ENCODE measurements at regions of chr10 and their contacts with region 1.

Region 1: GRCh38 chr10:21993360-21994001 is 10.0 kb downstream of the DNAJC1 start:
- DNase-seq: no peak
- H3K4me3 Mint-ChIP-seq: no peak overlapping the region
- H3K27ac Mint-ChIP-seq: no peak overlapping the region
- H3K4me1 Mint-ChIP-seq: peaks cover 11% of the 10 kb centered on the region
- H3K27me3 Mint-ChIP-seq: no peaks in the 10 kb centered on the region

Region 2: DNA sequence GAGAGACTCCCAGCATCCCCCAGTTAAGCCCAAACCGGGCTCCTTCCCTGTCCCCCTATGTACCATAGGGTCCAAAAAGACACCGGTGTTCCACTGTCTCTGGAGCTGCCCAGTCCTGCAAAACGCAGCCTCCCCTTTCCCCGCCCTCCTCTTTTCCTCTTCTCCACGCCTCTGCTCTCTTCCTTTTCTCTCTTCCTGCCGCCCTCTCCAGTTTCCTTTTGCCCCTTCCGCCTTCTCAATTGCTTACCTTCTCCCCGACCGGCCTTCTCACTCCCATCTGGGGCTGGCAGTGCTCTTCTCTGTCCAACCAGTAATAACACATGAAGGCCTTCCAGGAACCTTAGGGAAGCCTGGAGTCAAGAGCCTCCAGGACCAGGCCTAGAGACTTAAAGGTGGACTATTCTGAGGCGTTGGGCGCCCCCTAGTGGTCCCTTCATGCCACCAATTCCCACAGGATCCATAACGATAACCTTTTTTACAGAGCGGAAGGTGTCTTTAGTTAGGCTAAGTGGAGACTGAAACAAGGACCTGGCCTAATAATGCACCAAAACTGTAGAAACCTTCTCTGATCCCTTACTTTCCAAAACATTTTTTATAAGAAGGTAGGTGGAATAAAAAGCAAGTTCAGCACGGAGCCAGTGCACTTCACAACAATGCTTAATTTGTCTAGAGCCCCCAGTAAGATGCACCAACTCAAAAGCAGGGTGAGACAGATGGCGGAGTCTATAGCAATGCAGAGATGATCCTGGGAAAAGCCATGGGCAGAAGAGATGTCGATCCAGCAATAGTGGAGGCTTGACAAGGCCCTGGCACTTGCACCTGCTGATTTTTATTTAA is 1074.7 kb after region 1 on chr10:
- intact Hi-C with region 1: loop called (anchors 1 kb)
- DNase-seq: peak; percentile 24
- H3K4me3 Mint-ChIP-seq: no peak overlapping the region
- H3K27ac Mint-ChIP-seq: no peak overlapping the region
- H3K4me1 Mint-ChIP-seq: peaks cover 2% of the 10 kb centered on the region
- H3K27me3 Mint-ChIP-seq: peaks cover 3% of the 10 kb centered on the region

Measured in activated T-helper 2 cell treated with anti-CD3 and anti-CD28 coated beads, Interferon-gamma antibody, Interleukin-2, Interleukin-4, amounts not matched to agents 10 μg/mL and 5 μg/mL and 100 μg/mL, durations not matched to agents 14 hours and 24 hours and 36 hours (primary cell).